ACHN (cell line): ENCODE measurements at regions of chr5 and their contacts with region 1.

Region 1: GRCh38 chr5:134174841-134175839 is 1.6 kb downstream of the SKP1 start:
- DNase-seq: peak; percentile 32

Region 2: DNA sequence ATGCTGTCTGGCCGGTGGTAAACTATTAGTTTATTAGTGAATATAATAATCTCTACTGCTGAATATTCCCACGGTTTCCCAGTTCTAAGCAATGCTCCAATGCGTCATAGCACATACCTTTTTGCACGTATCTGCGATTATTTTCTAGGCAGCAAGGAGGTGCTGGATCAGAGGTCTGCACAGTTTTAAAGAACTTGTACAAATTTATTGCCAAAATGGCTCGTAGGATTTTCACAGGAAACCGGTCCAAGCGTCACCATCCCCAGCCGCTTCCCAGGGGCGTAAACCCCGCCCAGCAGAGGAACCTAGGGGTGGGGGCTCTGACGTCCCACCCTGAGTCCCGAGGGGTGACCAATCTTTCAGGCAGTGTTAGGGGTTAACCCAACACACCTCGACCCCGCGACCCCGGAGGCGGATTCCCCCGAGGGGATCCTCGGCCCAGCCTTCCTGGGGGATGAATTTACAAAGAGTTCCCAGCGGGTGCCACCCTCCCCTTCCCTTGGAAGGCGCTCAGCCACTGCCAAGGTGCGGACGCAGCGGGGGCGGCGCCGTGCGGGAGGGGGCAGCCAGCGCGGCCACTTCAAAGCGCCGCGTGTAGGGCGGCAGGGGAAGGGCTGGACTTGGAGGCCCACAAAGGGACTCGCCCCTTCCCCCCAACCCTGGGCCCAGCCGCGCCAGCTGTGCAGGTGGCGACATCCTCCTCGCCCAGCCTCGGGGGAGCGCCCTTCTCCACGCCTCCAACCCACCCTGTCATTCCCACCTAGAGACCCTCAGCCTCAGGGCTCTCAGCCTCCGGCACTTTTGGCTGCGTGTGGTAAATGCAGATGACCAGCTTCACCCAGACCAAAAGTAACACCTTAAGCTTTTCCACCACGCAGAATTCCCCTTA is 104.2 kb before region 1 on chr5:
- in situ Hi-C with region 1: loop called (anchors 25 kb)
- DNase-seq: peak; percentile 12